ENCODE measurements at regions of chr5 and their contacts with region 1.

Region 1: DNA sequence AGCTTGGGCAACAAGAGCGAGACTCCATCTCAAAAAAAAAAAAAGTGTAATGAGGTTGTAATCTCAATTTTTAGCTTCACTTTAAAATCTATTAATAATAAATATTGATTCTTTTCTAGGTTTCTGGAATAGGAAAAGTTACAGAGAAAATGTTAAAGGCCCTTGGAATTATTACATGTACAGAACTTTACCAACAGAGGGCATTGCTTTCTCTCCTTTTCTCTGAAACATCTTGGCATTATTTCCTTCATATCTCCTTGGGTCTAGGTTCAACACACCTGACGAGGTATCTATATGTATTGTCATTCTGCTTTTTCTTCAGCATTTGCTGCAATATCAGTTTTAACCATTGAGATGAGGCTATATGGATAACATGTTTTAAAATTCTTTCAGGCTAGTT is 26.6 kb upstream of the ANKDD1B start:
- DNase-seq: no peak
- ATAC-seq: no peak
- H3K4me3 ChIP-seq: no peak overlapping the region
- H3K27ac ChIP-seq: no peak overlapping the region
- H3K4me1 ChIP-seq: no peaks in the 10 kb centered on the region
- H3K27me3 ChIP-seq: no peaks in the 10 kb centered on the region
- CTCF ChIP-seq: 0 out of 2 replicates have a peak, but pooled peaks have one; percentile 11
- EP300 ChIP-seq: no peak
- POLR2A ChIP-seq: no peak
- RAD21 ChIP-seq: no peak

Region 2: GRCh38 chr5:75361310-75361709 is 223.3 kb before region 1 on chr5:
- CTCF ChIA-PET with region 1: no interaction called
- POLR2A ChIA-PET with region 1: no interaction called
- in situ Hi-C with region 1: no loop called
- intact Hi-C with region 1: no loop called
- DNase-seq: no peak
- ATAC-seq: no peak
- H3K4me3 ChIP-seq: no peak overlapping the region
- H3K27ac ChIP-seq: no peak overlapping the region
- H3K4me1 ChIP-seq: no peaks in the 10 kb centered on the region
- H3K27me3 ChIP-seq: no peaks in the 10 kb centered on the region
- CTCF ChIP-seq: no peak
- EP300 ChIP-seq: no peak
- POLR2A ChIP-seq: peak in 1 of 2 experiments; percentile 9; a peak in 1 of 4 replicates
- RAD21 ChIP-seq: no peak

Region 3: DNA sequence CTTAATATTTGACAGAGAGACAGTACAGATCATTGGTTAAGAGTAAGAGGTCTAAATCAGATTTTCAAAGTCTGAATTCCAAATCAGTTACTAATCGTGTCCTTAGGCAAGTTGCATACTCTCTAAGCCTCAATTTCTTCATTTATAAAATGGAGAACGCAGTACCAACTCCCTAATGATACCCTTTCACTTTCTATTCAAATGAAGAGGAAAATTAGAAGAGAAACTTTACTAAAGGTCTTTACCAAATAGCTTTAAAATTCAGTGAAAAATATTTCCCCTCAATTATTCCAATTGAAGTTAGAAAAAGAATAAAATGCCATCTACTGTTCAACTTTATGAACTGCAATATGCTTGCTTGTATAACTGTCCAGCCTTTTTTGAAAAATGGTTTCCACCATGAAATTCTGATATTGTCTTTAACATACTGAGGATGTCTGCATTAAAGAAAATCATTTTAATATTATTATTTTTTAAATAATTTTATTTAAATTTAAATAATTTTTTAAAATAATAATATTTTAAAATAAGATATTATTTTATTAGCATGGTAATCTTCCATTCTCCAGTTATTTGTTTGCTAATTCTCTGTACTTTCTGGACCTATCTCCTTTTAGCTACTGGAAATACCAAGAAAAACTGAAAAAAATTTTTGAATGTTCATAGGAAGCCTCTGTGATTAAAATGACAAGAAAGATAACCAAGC is 96.6 kb after region 1 on chr5:
- CTCF ChIA-PET with region 1: no interaction called
- POLR2A ChIA-PET with region 1: no interaction called
- in situ Hi-C with region 1: no loop called
- intact Hi-C with region 1: loop called (anchors 1 kb)
- DNase-seq: peak; percentile 28
- ATAC-seq: no peak; the same call in 2 of the 3 replicates
- H3K4me3 ChIP-seq: no peak overlapping the region
- H3K27ac ChIP-seq: no peak overlapping the region
- H3K4me1 ChIP-seq: peaks cover 11% of the 10 kb centered on the region
- H3K27me3 ChIP-seq: no peaks in the 10 kb centered on the region
- CTCF ChIP-seq: peak; percentile 46
- EP300 ChIP-seq: no peak
- POLR2A ChIP-seq: no peak
- RAD21 ChIP-seq: 0 out of 2 replicates have a peak, but pooled peaks have one; percentile 25

Measured in HepG2 (cell line).